Calu3 (cell line): ENCODE measurements at regions of chr18 and their contacts with region 1.

Region 1: DNA sequence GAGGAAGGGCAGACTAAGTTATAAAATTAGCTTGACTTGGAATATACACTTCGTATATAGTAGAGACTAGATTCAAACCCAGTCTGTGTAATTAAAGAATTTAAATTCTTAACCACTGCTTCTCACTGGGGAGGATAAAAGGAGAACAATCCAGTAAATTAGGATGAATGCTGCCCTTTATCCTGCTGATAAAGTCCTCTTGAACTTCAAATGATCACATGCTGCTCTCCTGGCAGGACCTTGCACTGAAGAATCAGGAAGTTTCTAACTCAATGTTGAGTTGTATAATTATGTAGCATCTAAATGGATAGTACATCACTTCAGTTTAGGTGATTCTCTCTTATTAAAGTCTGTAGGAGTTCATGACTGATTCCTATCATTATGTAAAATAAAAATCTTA is 1179.7 kb downstream of the DSC3 start:
- DNase-seq: no peak
- H3K4me3 Mint-ChIP-seq: no peak overlapping the region
- H3K27ac Mint-ChIP-seq: no peak overlapping the region
- H3K4me1 Mint-ChIP-seq: no peaks in the 10 kb centered on the region
- H3K27me3 Mint-ChIP-seq: no peaks in the 10 kb centered on the region
- CTCF ChIP-seq: no peak

Region 2: DNA sequence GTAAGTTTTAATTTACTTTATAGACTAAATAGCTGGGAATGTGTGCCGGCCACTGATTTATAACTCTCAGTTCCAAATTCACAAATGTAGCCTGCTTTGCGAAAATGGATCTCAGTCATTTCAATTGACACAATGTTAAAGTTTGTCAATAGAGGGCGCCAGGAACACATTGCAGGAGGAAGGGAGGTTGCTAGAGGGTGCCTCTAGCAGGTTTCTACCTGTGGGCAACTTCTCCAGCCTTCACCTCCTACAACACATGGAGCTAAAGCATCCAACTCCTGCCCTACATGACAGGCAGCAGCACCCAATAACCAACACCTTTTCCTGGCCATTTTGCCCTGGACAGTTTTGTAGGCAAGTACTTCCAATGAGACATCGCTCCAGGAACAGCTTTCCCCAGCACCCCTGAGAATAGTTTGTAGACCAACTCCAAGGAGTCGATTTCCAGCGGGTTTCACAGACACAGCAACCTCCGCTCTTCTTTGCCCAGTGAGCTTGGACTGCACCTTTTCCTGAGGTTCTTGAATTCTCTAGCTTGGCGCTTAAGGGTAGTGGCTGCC is 901.1 kb before region 1 on chr18:
- CTCF ChIA-PET with region 1: no interaction called
- intact Hi-C with region 1: loop called (anchors 10 kb)
- DNase-seq: peak; percentile 37
- H3K4me3 Mint-ChIP-seq: no peak overlapping the region
- H3K27ac Mint-ChIP-seq: no peak overlapping the region
- H3K4me1 Mint-ChIP-seq: no peaks in the 10 kb centered on the region
- H3K27me3 Mint-ChIP-seq: no peaks in the 10 kb centered on the region
- CTCF ChIP-seq: peak; percentile 42

Region 3: GRCh38 chr18:29928081-29928480 is 65.3 kb after region 1 on chr18:
- CTCF ChIA-PET with region 1: no interaction called
- intact Hi-C with region 1: loop called (anchors 10 kb)
- DNase-seq: no peak
- H3K4me3 Mint-ChIP-seq: no peak overlapping the region
- H3K27ac Mint-ChIP-seq: no peak overlapping the region
- H3K4me1 Mint-ChIP-seq: no peaks in the 10 kb centered on the region
- H3K27me3 Mint-ChIP-seq: no peaks in the 10 kb centered on the region
- CTCF ChIP-seq: no peak